Aorta (tissue), 5 donors: ENCODE measurements at regions of chr1 and their contacts with region 1.

Region 1: GRCh38 chr1:116122955-116123757 is 12.0 kb downstream of the MAB21L3 start:
- DNase-seq: no peak
- ATAC-seq: no peak
- H3K4me3 ChIP-seq: no peak overlapping the region
- H3K27ac ChIP-seq: no peak overlapping the region
- H3K4me1 ChIP-seq: peaks cover 0 to 2% of the 10 kb centered on the region in 2 donors
- H3K27me3 ChIP-seq: peaks cover 0 to 2% of the 10 kb centered on the region in 2 donors

Region 2: DNA sequence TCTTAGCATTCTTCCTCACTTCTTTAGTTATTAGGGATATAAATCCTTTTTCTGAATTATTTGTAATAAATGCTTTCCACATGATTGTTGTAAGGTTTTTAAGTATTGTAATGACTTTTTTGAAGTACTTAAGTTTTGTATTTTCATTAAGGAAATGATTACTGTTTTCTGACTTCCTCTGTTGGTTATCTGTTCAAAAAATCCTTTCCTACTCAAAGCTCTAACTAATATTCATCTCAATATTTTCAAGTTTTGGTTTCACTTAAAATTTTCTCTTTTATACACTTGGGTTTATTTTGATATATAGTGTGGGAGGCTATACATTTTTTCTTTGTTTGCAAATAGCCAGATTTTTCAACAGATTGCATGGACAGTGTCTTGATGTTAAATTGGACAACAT is 222.3 kb before region 1 on chr1:
- intact Hi-C with region 1: no loop called
- DNase-seq: no peak
- ATAC-seq: no peak
- H3K4me3 ChIP-seq: no peak overlapping the region
- H3K27ac ChIP-seq: no peak overlapping the region
- H3K4me1 ChIP-seq: no peaks in the 10 kb centered on the region
- H3K27me3 ChIP-seq: no peaks in the 10 kb centered on the region

Region 3: DNA sequence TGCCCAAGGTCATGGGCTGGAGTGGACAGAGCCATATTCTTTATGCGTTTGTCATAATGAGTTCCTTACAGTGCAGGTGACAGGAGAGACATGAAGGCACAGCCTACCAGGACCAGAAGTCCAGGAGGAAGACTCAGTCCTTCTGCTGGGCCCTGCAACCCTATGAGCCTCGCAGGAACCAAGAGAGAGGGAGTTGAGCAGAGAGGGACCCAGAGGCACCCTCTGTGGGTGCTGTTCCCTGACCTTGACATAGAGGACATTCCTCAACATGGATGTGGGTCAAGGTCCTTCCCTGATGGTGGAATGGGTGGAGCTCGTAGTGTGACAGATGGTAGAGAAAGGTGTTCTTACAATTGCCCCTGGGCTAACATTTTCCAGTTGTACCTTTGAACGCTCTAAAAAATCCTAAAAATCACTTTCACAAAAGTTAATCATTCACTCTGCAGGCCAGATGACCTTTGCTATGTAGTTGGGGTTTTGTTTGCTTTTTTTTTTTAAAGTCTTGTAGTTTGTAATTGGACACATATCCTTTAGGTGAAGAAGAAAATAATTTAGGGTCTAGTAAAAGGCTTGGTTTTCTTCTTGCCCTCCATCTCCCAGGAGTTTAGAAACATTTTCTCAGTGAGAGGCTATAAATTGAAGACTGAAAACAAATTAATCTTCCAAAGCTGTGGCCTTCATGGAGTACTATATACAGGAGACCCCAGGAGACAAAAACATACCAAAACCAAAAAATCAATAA is 30.0 kb after region 1 on chr1:
- intact Hi-C with region 1: no loop called
- DNase-seq: no peak
- ATAC-seq: no peak
- H3K4me3 ChIP-seq: no peak overlapping the region
- H3K27ac ChIP-seq: no peak overlapping the region
- H3K4me1 ChIP-seq: no peaks in the 10 kb centered on the region
- H3K27me3 ChIP-seq: no peaks in the 10 kb centered on the region

Region 4: DNA sequence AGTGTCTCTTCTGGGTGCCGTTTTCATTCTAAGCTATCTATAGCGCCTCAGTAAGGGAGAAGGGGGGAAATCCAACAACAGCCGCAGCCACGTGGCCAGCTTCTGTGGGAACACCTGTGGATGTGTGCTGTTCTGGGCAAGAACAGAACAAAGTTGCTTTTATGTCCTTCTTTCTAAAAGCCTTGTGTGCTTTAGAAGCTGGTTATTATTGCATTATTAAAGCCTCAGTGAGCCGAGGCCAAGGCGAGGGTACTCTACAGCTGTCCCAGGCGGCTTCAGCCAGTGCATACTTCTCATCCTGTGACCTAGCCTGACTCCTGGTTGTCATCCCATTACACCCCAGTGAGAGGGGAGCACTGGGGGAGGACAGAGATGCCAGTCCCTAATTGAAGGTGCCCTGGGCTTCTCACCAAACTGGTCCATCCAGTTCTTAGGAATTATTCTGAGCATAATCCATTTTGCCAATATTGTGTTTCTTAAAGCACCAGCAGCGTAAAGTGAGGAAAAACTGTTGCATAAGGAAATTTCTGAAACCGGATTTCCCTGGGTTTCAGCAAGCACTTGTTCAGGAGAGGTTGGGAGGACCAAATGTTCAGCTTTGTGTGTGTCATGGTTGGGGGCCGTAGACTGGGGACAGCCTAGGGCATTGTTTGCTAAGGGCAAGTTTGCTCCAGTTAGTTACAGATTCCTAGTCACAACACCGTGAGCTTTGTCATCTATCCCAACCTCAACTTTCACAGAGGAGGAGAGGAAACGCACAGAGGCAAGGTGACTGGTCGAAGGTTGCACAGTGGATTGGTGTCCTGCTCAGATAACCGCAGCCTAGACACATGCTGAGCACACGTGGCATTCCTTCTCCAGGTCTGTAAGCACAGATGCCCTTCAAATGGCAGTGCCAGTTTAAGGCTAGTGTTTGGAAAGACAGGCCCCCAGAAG is 188.9 kb after region 1 on chr1:
- intact Hi-C with region 1: loop called in 1 of 2 experiments (anchors 10 kb)
- DNase-seq: no peak
- ATAC-seq: no peak
- H3K4me3 ChIP-seq: no peak overlapping the region
- H3K27ac ChIP-seq: no peak overlapping the region
- H3K4me1 ChIP-seq: no peaks in the 10 kb centered on the region
- H3K27me3 ChIP-seq: no peaks in the 10 kb centered on the region